GM13977 (cell line): ENCODE measurements at regions of chr2 and their contacts with region 1.

Region 1: DNA sequence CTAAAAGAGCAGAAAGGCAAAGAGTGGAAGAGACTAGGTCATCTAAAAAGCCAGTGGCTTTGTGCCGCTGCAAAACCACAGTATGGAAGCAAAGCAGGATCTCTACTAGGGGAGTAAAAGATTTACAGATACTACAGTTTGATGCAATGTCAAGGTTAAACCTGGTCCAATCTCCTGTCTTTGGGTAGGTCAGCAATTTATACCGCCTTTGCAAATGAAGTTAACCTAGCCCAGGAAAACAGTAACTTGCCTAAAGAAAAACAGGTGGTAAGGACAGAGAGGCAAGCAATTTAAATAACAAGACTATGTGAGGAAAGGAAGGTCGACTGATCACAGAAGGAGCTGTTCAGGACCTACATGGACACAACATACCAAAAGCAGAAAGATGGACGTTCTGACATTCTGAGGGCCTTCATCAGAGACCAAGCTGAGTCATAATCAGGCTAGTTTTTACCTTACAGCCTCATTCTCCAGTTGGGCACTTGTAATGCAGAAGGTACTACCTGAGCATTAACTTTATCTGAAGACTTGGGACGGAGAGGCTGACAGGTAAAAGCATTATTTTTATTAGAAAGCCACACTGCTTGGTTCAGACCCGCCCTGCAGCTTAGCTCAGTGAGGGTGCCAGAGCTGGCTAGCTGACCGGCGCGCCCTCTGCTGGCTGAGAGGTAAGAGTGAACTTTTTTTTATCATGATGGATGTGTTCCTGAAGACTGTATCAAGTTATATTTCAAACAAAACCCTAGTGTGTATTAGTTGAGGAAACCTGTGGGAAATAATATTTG is 15.9 kb downstream of the CDKL4 start:
- DNase-seq: peak; percentile 72
- CTCF ChIP-seq: peak; percentile 82

Region 2: DNA sequence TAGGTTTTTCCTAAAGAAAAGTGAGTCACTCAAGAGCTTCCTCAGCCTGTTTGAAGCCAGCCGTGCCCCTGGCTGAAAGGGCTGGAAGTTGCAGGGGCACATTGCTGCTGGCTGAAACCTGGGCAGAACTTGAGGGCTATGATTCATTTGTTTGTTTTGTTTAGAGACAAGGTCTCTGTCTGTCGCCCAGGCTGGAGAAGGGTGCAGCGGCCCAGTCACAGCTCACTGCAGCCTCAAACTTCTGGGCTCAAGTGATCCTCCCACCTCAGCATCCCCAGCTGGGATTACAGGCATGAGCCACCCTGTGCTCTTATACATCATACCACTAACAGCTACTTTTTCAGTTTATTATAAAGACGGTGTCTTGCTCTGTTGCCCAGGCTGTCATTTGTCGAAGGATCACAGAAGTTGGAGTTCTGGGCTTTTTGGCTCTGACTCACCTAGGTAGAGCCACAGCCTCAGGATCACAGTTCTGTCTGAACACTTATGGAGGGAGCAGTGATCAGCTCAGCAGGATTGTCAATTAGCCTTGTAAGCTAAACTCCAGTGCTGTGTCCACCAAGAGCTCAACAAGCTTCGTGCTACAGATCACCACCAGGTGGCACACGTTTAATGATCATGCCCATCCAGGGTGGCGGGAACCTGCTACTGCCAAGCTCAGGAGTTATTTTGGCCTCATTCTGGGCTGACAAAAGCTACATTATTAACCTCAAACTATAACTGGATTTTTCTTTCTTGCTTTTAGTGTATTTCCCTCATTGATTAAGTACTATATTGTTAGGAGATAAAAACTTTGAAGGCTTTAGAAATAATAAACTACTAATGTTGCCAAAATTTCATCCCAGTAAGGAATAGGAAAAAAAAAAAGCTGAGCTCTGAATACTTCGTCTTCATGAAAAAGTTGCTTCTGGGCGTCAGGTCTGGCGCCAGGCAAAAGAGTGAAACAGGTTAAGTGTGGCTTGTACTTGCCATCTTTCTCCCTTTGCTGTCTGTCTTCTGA is 280.3 kb before region 1 on chr2:
- in situ Hi-C with region 1: loop called (anchors 10 kb)
- DNase-seq: peak; percentile 77
- CTCF ChIP-seq: peak; percentile 82

Region 3: DNA sequence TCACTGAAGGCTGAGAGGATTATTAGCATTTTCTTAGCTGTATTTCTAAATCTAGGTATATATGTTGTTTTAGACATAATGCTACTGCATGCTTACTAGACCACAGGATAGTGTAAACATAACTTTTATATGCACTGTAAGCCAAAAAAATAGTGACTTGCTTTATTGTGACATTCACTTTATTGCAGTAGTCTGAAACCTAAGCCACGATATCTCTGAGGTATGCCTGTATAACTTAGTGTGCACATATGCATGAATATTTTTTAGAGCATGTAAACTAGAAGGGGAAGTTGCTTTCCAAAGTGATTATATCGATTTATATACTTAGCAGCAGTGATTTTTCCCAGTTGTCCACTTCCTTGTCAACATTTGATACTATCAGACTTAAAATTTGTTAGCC is 188.7 kb before region 1 on chr2:
- in situ Hi-C with region 1: no loop called
- DNase-seq: no peak
- CTCF ChIP-seq: no peak

Region 4: GRCh38 chr2:39069136-39069515 is 158.7 kb before region 1 on chr2:
- in situ Hi-C with region 1: loop called (anchors 10 kb)
- DNase-seq: no peak
- CTCF ChIP-seq: peak; percentile 20

Region 5: GRCh38 chr2:39455826-39456225 is 228.0 kb after region 1 on chr2:
- in situ Hi-C with region 1: no loop called
- DNase-seq: no peak
- CTCF ChIP-seq: no peak

Region 6: DNA sequence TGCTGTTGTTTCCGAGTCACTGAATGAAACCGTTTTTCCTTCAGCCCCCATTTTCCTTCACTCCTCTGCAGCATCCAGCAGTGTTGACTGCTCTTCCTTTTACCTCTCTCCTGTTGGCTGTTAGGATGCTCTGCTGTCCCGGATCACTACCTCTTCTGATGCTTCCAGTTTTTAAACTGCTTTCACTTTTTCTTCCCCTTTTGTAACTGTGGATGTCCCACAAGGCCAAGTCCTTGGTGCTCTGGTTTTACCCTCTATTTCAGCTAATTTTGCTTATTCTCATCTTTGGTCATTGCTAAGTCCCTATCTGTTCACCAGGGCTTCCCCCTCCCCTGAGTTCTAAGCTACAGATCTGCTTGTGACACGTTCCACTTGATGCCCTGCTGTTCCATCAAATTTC is 248.7 kb after region 1 on chr2:
- in situ Hi-C with region 1: no loop called
- DNase-seq: peak; percentile 17
- CTCF ChIP-seq: no peak

Region 7: GRCh38 chr2:39728941-39729351 is 501.1 kb after region 1 on chr2:
- in situ Hi-C with region 1: loop called (anchors 25 kb)
- DNase-seq: peak; percentile 22
- CTCF ChIP-seq: peak; percentile 75